SK-N-SH (cell line): ENCODE measurements at regions of chr11 and their contacts with region 1.

Region 1: DNA sequence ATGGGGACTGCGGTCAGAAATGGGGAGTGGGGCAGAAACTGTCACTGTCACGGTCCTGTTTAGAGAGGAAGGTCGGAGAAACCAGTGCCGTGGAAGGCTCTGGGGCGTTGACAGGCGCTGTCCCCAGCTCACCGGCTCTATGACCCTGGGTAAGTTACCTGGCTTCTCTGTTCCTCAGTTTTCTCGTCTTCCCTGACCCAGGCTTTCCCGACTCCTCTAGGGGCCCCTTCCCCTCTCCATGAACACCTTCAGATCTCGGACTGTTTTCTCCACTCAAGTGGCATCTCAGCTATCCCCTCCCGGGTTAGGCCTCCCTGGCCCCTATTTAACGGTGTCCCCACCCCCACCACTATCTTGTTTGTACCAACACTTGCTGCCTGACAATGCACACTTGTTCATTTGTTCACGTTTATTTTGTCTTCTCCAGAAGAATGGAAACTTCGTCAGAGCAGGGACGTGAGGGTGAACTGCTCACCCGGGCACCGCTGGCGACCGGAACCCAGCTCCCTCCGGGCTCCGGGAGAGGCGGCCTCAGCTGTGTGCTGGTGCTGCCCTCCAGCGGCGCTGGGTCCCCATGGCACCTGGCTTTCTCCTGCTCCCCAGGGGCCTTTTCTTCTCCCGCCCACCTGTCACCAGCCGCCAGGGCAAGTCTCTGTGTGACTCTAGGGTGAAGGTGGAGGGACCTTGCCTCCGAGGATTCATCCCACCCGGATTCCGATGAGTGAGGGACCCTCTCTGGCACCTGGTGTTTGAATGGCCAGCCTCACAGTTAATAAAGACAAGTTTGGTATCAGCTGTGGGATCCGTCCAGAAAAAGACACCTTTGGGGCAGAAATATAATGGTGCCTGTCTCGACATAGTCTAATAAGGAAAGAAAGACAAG is 33.1 kb upstream of the SLC35C1 start:
- DNase-seq: peak; percentile 95
- H3K4me3 ChIP-seq: peak overlapping the region; percentile 45 to 69
- H3K27ac ChIP-seq: no peak overlapping the region
- H3K4me1 ChIP-seq: peaks cover 0 to 7% of the 10 kb centered on the region in 2 experiments; a peak in 2 of 4 replicates
- H3K27me3 ChIP-seq: peaks cover 17% of the 10 kb centered on the region; the same call in 1 of the 2 replicates
- CTCF ChIP-seq: peak; percentile 91
- EP300 ChIP-seq: no peak
- RAD21 ChIP-seq: peak; percentile 95

Region 2: GRCh38 chr11:45339729-45340519 is 431.9 kb before region 1 on chr11:
- CTCF ChIA-PET with region 1: interaction called, 104 read pairs
- POLR2A ChIA-PET with region 1: no interaction called
- DNase-seq: peak; percentile 90
- H3K4me3 ChIP-seq: peak overlapping the region in 1 of 2 experiments; percentile 22; a peak in 2 of 4 replicates
- H3K27ac ChIP-seq: no peak overlapping the region
- H3K4me1 ChIP-seq: peaks cover 0 to 8% of the 10 kb centered on the region in 2 experiments; a peak in 2 of 4 replicates
- H3K27me3 ChIP-seq: peaks cover 37% of the 10 kb centered on the region; the same call in 1 of the 2 replicates
- CTCF ChIP-seq: peak; percentile 83
- EP300 ChIP-seq: no peak
- RAD21 ChIP-seq: peak; percentile 67

Region 3: GRCh38 chr11:45383224-45383623 is 388.6 kb before region 1 on chr11:
- CTCF ChIA-PET with region 1: interaction called, 252 read pairs
- POLR2A ChIA-PET with region 1: no interaction called
- DNase-seq: no peak
- H3K4me3 ChIP-seq: no peak overlapping the region
- H3K27ac ChIP-seq: no peak overlapping the region; a peak in 1 of 4 replicates
- H3K4me1 ChIP-seq: peaks cover 4 to 5% of the 10 kb centered on the region in 2 experiments; a peak in 2 of 4 replicates
- H3K27me3 ChIP-seq: no peaks in the 10 kb centered on the region
- CTCF ChIP-seq: no peak
- EP300 ChIP-seq: no peak; a peak in 1 of 4 replicates
- RAD21 ChIP-seq: no peak

Region 4: GRCh38 chr11:45411228-45411946 is 360.4 kb before region 1 on chr11:
- CTCF ChIA-PET with region 1: interaction called, 27 read pairs
- POLR2A ChIA-PET with region 1: no interaction called
- DNase-seq: peak; percentile 46
- H3K4me3 ChIP-seq: peak overlapping the region; percentile 17 to 20; a peak in 1 of 4 replicates
- H3K27ac ChIP-seq: peak overlapping the region; percentile 86 to 94
- H3K4me1 ChIP-seq: peaks cover 26 to 38% of the 10 kb centered on the region in 2 experiments
- H3K27me3 ChIP-seq: no peaks in the 10 kb centered on the region
- CTCF ChIP-seq: no peak
- EP300 ChIP-seq: peak in 1 of 2 experiments; percentile 54; a peak in 2 of 4 replicates
- RAD21 ChIP-seq: no peak

Region 5: GRCh38 chr11:45683271-45684058 is 88.3 kb before region 1 on chr11:
- CTCF ChIA-PET with region 1: interaction called, 11 read pairs
- POLR2A ChIA-PET with region 1: no interaction called
- DNase-seq: no peak
- H3K4me3 ChIP-seq: no peak overlapping the region
- H3K27ac ChIP-seq: no peak overlapping the region
- H3K4me1 ChIP-seq: peaks cover 0 to 9% of the 10 kb centered on the region in 2 experiments; a peak in 2 of 4 replicates
- H3K27me3 ChIP-seq: peaks cover 15% of the 10 kb centered on the region; the same call in 1 of the 2 replicates
- CTCF ChIP-seq: no peak
- EP300 ChIP-seq: no peak
- RAD21 ChIP-seq: no peak

Region 6: GRCh38 chr11:45745065-45745811 is 26.6 kb before region 1 on chr11:
- CTCF ChIA-PET with region 1: interaction called, 14 read pairs
- POLR2A ChIA-PET with region 1: no interaction called
- DNase-seq: no peak
- H3K4me3 ChIP-seq: no peak overlapping the region
- H3K27ac ChIP-seq: no peak overlapping the region
- H3K4me1 ChIP-seq: no peaks in the 10 kb centered on the region; a peak in 1 of 4 replicates
- H3K27me3 ChIP-seq: no peaks in the 10 kb centered on the region; the same call in 1 of the 2 replicates
- CTCF ChIP-seq: no peak
- EP300 ChIP-seq: no peak
- RAD21 ChIP-seq: no peak

Region 7: DNA sequence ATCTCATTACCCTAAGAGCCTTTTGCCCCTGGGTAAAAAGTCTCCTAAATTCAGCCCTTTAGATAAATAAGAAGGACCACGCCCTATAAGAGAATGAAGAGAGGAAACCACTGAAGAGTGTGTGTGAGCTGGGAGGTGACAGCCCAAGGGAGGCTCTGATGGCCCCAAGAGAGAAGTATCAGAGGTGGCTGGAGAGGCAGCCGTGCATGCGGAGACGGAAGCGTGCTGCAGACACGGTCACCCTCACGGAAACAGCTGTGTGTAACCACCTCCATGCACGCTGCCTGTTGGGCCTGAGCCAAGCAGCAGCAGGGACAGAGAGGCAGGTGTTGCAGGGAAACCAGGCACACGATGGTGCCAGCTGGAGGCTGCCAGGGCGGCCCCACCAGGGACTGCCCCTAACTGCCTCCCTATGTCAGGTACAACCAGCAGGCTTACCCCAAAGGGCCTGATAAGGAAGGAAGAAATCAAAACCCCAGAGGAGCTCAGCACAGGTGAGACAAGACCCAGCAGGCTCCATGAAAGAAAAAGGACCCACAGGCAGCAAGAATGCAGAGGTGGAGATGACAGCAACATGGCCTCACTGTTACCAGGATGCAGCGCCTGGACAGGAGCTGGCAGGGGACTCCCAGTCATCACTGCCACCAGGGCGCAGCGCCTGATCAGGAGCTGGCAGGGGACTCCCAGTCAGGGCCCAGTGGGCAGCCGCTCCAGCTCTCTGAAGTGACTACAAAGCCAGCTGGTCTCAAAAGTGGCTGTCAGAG is 158.4 kb after region 1 on chr11:
- CTCF ChIA-PET with region 1: no interaction called
- POLR2A ChIA-PET with region 1: no interaction called
- DNase-seq: peak; percentile 39
- H3K4me3 ChIP-seq: no peak overlapping the region
- H3K27ac ChIP-seq: no peak overlapping the region; a peak in 1 of 4 replicates
- H3K4me1 ChIP-seq: peaks cover 0 to 5% of the 10 kb centered on the region in 2 experiments; a peak in 1 of 4 replicates
- H3K27me3 ChIP-seq: no peaks in the 10 kb centered on the region
- CTCF ChIP-seq: no peak
- EP300 ChIP-seq: no peak
- RAD21 ChIP-seq: no peak